Activated CD4-positive, alpha-beta T cell treated with anti-CD3 and anti-CD28 coated beads, Interleukin-2, amount 10 ng/mL, durations not matched to agents 24 days and 14 days (primary cell): ENCODE measurements at regions of chr1 and their contacts with region 1.

Region 1: DNA sequence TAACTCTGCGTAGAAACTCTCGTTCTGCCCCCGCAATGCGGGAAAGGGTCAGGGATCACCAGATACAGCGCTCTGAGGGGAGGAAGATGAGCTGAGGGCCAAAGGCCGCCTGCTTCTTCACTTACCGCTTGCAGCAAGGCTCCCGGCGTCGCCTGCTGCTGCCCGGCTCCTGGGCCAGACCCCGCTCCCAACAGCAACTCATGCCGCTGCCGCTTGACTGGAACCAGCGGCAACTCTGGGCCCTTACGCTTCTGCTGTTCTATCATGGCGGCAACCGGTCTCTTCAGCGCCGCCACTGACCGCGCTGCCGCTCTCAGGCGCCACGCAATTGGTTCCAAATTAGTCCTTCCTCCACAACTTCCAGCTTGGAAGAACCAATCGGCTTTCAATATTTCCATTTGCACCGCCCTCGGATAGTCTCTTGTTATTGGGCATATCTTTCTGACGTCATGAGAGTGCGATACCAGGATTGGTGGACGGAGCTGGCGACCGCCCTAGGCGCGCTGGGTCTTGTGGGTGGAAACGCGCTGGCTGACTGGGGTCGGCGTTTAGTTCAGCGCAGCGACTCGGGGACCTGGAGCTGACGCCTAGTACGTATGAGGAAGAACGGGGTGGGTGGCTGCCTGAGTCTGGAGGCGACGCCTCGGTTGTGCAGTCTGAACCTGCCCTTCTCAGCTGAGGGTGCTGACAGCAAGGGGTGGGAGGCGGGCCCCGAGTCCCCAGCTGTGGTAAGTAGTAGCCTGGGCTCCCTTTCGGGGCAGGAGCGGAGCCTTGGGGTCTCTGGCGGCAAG is at the starts of genes SNRNP40 and ZCCHC17:
- DNase-seq: peak; percentile 98
- H3K4me3 Mint-ChIP-seq: no peak within 1 kb of the TSS
- H3K27ac Mint-ChIP-seq: no peak within 1 kb of the TSS
- H3K4me1 Mint-ChIP-seq: peaks cover 26% of the 10 kb centered on the region
- H3K27me3 Mint-ChIP-seq: no peaks in the 10 kb centered on the region
- total RNA-seq, gene SNRNP40: 132 and 133 TPM in 2 replicates
- total RNA-seq, gene ZCCHC17: 25.5 and 26.2 TPM in 2 replicates

Region 2: DNA sequence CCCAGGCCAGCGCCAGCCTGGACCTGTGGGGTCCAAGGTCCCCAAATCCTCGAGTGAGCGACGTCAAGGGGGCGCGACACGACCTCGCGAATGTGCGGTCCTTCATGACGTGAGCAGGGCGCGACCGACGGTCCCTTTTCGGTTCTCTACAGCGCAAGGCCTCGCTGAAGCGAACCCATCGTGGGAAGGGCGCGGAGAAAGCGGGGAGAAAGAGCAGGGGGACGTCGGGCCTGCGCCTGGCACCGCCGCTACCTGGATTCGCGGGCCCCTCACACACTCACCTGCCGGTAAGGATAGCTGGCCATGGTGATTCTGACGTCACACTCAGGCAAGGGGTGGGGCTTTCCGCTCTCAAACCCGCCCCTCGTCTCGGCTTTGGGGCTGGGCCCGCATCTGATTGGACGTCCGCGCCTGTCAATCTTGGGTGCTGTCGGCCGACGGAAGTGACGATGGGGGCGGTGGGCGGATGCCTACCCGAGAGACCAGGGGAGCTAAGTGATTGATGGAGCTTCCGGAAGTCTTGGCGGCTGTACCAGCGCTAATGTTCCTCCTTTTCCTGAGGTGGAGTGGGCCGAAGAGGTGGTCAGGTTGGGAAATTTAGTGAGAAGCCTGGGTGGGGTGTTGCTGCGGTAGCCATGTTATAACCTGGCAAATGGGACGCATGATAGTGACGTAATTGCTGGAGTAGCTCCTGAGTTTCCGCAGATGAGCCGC is 348.0 kb after region 1 on chr1 and contains the start of gene PEF1:
- intact Hi-C with region 1: loop called (anchors 1 kb)
- DNase-seq: peak; percentile 100
- H3K4me3 Mint-ChIP-seq: peak within 1 kb of the TSS; percentile 97
- H3K27ac Mint-ChIP-seq: peak within 1 kb of the TSS; percentile 100
- H3K4me1 Mint-ChIP-seq: peaks cover 20% of the 10 kb centered on the region
- H3K27me3 Mint-ChIP-seq: no peaks in the 10 kb centered on the region
- total RNA-seq, gene PEF1: 64.0 and 64.4 TPM in 2 replicates

Region 3: DNA sequence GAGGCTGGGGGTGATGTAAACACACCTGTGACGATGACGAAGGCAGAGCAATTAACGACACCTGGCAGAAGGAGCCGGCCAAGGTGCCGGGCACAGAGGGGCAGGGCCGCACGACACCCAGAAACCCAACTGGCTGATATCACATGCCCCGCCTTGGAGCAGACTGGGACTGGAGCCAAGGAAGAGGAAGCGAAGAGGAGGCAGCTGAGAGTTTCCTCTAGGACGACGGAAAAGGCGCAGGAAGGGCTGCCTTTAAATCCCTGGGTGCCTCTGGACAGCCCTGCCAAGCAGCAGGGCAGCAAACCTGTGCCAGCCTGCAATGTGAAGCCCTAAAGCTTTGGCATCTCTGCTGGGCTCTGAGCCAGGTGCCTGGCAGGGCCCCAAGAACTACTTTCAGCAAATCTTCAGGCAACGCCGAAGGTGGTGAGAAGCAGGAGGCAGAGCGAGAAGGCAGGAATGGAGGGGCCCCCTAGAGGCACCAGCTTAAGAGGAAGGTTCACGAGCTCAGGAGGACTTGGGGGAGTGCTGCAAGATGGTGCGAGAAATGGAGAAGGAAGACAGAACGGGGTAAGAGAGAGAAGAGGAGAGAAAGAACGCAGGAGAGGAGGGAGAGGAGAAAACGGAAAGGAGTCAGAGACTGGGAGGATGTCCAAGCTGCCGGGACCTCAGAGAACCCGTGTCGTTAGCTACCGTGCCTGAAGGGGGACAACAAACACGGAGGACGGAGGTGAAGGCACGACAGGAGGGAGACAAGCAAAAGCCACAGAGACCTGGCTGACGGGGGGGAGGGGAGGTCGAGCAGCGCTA is 373.3 kb after region 1 on chr1:
- intact Hi-C with region 1: no loop called
- DNase-seq: peak; percentile 59
- H3K4me3 Mint-ChIP-seq: peak overlapping the region; percentile 25
- H3K27ac Mint-ChIP-seq: no peak overlapping the region
- H3K4me1 Mint-ChIP-seq: peaks cover 4% of the 10 kb centered on the region
- H3K27me3 Mint-ChIP-seq: peaks cover 24% of the 10 kb centered on the region